AG04450 (cell line): ENCODE measurements at regions of chr7 and their contacts with region 1.

Region 1: DNA sequence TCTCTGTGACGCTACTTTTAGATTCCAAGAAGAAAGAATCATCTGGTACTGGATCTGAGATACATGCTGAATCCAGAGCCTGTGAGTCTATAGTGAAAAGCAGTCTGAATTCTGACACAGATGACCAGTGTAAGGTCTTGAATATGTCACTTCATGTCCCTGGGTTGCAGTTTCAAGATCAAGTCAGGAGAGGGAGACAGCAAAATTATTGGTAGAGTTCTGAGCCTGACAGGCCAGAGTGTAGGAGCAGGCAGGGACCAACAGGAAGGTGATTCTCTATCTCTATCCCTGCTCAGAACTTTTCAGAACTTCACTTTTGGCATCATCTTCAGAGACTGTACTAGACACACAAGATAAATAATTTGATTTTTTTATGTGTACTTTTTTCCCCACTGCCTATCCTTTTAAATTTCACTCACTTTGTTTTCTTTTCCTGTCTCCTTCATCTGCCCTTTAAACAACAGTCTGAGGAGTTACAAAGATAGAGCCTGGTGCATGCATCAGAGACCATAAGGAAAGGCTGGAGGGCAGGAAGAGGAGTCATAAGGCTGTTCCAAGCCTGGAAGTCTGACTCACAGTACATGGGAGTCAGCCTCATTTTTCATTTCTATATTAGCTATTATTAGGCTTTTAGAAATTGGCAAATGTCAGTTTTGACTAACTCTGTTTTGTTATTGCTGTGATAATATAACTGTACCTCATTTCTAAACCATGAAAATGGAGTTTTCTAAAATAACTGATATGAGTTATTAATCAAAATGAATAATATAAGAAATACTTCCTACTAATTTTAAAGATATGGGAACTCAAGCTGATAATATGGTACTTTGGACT is 120.2 kb upstream of the TMEM229A start:
- DNase-seq: peak; percentile 21
- H3K4me3 ChIP-seq: no peak overlapping the region
- H3K27ac ChIP-seq: no peak overlapping the region
- H3K27me3 ChIP-seq: no peaks in the 10 kb centered on the region
- CTCF ChIP-seq: peak; percentile 46

Region 2: DNA sequence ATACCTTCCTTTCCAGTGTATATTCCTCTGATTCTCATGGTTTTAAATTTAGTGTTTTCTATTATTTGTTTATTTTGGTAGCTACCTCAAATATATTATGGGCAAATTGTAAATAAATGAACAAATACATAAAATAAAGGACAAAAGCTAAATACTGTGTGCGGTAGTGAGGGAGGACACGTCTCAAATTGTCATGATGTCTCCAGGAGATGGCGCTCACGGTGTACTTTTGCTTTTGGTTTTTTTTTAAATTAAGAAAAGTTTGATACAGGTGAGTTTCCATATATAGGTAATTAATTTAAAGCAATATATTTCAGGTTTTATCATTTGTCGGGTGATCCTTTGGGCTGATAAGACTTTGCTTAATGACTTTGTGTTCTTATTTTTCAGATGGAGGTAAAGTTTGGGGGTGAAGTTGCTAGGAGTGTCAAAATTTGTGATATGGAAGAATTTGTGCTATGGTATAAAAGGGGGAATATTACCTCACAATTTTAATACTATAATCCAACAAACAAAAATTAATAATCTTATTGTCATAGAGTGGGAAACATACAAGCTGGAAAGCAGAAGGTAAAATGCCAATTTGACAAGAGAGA is 51.8 kb before region 1 on chr7:
- CTCF ChIA-PET with region 1: interaction called, 17 read pairs
- POLR2A ChIA-PET with region 1: no interaction called
- DNase-seq: no peak
- H3K4me3 ChIP-seq: no peak overlapping the region
- H3K27ac ChIP-seq: no peak overlapping the region
- H3K27me3 ChIP-seq: no peaks in the 10 kb centered on the region
- CTCF ChIP-seq: peak; percentile 58

Region 3: GRCh38 chr7:124765401-124766352 is 612.6 kb after region 1 on chr7 and contains the start of gene GPR37:
- CTCF ChIA-PET with region 1: interaction called, 81 read pairs
- POLR2A ChIA-PET with region 1: no interaction called
- DNase-seq: peak; percentile 78
- H3K4me3 ChIP-seq: peak within 1 kb of the TSS; percentile 90
- H3K27ac ChIP-seq: peak within 1 kb of the TSS; percentile 82
- H3K27me3 ChIP-seq: no peaks in the 10 kb centered on the region
- CTCF ChIP-seq: peak; percentile 78
- polyA plus RNA-seq, gene GPR37: 5.5 and 11.2 TPM in 2 replicates

Region 4: DNA sequence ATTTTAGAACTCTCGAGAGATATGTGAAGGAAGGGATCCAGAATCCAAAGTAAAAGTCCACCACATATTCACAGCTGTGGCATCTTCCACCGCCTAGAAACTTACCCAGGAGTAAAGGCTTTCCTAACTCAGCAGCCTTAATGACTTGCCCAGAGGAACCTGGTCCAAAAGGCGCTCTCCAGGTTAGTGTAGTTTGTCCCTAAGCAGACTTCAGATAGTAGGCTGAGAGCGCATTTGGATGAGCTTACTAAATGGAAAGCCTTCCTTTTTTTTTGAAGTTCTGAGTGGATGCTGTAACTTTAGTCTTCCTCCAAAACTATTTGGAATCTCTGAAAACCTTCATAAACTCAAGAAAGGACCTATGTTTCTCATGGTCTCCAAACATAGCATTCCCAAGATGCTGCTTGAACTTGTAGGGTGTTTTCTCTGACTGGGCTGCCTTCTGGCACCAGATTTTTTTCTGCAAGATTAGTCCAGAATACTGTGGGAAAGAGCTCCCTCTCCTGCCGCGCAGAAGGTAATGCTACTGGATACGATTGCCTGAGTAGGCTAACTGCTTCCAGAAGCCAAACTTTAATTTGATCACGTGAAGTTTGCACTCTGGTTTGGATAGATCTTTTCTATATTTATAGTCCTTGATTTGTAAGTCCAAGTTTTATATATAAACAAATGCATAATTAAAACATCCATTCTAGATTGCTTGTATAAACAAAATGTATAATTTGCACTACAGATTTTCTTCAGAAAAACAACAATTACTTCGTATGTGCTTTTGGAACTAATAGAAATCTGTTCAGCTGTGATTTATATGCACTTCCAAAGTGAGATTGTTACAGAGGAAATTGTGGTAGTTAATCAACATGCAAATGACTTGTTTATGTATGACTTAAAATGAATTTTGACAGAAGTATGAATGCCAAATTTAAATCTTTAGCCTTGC is 632.1 kb after region 1 on chr7:
- CTCF ChIA-PET with region 1: interaction called, 110 read pairs
- POLR2A ChIA-PET with region 1: no interaction called
- DNase-seq: peak; percentile 65
- H3K4me3 ChIP-seq: no peak overlapping the region
- H3K27ac ChIP-seq: no peak overlapping the region
- H3K27me3 ChIP-seq: no peaks in the 10 kb centered on the region
- CTCF ChIP-seq: peak; percentile 95

Region 5: DNA sequence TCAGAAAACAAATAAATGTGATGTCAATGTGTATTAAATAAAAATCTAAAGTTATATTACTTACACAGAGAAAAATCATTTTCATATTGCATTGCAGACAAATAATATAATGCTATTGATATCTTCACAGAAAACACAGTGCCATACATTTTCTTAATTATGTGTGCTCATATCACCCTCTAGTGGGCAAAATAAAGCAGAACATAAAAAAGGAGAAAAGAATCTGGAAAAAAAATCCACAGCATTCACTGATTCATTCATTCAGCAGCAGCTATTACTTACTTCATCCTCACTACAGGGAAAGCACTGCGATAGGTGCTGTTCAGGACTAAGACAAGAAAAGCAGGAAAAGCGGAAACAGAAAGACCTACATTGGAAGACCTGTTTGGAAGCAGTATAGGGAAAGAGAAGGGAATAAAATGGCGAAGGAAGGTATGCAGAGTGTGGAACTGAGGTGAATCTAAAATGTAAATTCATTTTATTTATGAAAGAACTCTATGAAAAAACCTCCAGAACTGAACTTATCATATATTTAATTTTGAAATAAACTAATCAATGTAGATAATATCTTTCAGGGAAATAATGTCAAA is 703.3 kb after region 1 on chr7:
- CTCF ChIA-PET with region 1: interaction called, 50 read pairs
- POLR2A ChIA-PET with region 1: no interaction called
- DNase-seq: peak; percentile 13
- H3K4me3 ChIP-seq: no peak overlapping the region
- H3K27ac ChIP-seq: no peak overlapping the region
- H3K27me3 ChIP-seq: no peaks in the 10 kb centered on the region
- CTCF ChIP-seq: peak; percentile 74